ENCODE measurements at regions of chr10 and their contacts with region 1.

Region 1: GRCh38 chr10:124916585-124917427 is 25.1 kb upstream of the ZRANB1 start:
- DNase-seq: peak; percentile 98 to 99
- ATAC-seq: peak; percentile 98 to 99 (median 99)
- H3K4me3 ChIP-seq: peak overlapping the region; percentile 74 to 92 (median 86)
- H3K27ac ChIP-seq: peak overlapping the region; percentile 86 to 99 (median 96)
- H3K4me1 ChIP-seq: peaks cover 7 to 55% (median 46%) of the 10 kb centered on the region in 9 donors
- H3K27me3 ChIP-seq: no peaks in the 10 kb centered on the region
- CTCF ChIP-seq: peak in 1 of 9 donors; percentile 4

Region 2: GRCh38 chr10:124802313-124802675 is 114.5 kb before region 1 on chr10:
- intact Hi-C with region 1: loop called in 2 of 10 experiments (anchors 10 kb)
- DNase-seq: no peak
- ATAC-seq: peak in 1 of 8 donors; percentile 22
- H3K4me3 ChIP-seq: peak overlapping the region; percentile 90 to 100 (median 99)
- H3K27ac ChIP-seq: peak overlapping the region in 9 of 10 donors; percentile 77 to 94 (median 86)
- H3K4me1 ChIP-seq: peaks cover 5 to 23% (median 17%) of the 10 kb centered on the region in 9 donors
- H3K27me3 ChIP-seq: no peaks in the 10 kb centered on the region
- CTCF ChIP-seq: no peak

Region 3: DNA sequence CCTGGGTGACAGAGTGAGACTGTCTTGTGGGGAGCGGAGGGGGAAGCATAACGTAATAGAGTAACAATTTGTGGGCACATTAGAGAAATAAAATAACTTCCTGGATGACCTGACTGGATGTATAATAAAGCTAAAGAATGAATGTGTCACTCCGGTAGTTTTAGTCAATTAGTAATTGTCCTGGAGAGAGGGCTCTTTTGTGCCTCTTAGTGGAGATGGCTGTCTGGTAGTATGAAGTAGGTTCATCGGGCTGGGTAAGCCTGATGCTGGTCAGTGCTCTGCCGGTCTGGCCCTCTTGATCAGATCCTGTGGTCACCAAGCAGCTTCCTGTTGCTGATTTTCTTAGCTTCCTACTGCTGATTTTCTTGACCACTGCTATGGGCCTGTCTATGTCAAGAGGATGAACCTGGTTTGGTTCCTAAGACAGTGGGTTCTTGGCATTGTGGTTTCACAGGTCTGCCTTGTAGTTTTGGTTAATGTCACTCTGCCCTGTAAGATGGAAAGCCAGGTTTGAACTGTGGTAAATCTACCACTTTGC is 59.2 kb after region 1 on chr10:
- intact Hi-C with region 1: loop called in 3 of 10 experiments (anchors 10 kb)
- DNase-seq: no peak
- ATAC-seq: peak in 2 of 8 donors; percentile 17 to 29
- H3K4me3 ChIP-seq: no peak overlapping the region
- H3K27ac ChIP-seq: no peak overlapping the region
- H3K4me1 ChIP-seq: peaks cover 2 to 32% (median 14%) of the 10 kb centered on the region in 9 donors
- H3K27me3 ChIP-seq: no peaks in the 10 kb centered on the region
- CTCF ChIP-seq: no peak

Region 4: GRCh38 chr10:124992462-124993344 is 75.9 kb after region 1 on chr10:
- intact Hi-C with region 1: loop called in 1 of 10 experiments (anchors 10 kb)
- DNase-seq: peak; percentile 38 to 90
- ATAC-seq: peak; percentile 39 to 90 (median 76)
- H3K4me3 ChIP-seq: no peak overlapping the region
- H3K27ac ChIP-seq: peak overlapping the region in 1 of 10 donors; percentile 4
- H3K4me1 ChIP-seq: peaks cover 0 to 29% (median 5%) of the 10 kb centered on the region in 9 donors
- H3K27me3 ChIP-seq: no peaks in the 10 kb centered on the region
- CTCF ChIP-seq: peak; percentile 59 to 87 (median 79)

Region 5: GRCh38 chr10:125611216-125611615 is 694.4 kb after region 1 on chr10:
- intact Hi-C with region 1: no loop called
- DNase-seq: no peak
- ATAC-seq: no peak
- H3K4me3 ChIP-seq: no peak overlapping the region
- H3K27ac ChIP-seq: no peak overlapping the region
- H3K4me1 ChIP-seq: no peaks in the 10 kb centered on the region
- H3K27me3 ChIP-seq: no peaks in the 10 kb centered on the region
- CTCF ChIP-seq: no peak

Region 6: DNA sequence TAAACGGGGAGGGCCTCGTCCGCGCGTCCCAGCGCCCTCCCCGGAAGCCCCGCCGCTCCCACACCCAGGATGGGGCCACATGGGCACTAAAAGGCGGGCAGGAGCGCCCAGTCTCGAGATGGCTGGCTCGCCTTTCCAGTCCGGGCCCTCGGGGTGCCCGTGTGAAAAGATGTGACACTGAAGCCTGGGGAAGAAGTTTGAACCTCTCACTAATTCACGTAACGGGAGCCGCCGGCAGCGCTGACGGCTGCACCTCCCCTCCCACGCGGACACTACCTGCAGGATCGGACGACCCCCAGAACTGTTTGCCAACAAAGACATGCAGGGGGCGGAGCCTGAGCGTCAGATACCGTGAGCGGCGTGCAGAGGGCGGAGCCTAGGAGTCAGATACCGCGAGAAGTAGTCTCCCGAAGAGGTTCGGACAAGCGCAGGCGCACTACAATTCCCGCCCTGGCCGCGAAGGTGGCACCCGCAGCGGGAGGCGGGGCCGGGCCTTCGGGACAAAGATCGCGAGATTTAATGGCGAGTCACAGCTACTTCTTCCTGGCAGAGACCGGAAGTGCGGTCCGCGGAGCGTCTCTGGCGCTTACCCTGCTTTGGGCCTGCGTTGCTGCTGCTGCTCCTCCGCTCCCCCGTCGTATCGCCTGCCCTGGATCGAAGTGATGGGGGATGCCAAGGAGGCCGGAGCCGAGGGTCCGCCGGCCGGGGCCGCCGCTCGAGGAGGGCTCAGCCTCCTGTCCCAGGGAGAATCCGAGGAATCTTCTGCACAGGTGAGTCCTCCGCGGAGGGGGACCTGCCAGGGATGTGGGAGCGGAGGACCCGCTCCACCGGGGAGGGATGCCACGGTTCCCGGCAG is 802.6 kb after region 1 on chr10 and contains the start of gene EDRF1:
- intact Hi-C with region 1: loop called in 1 of 10 experiments (anchors 10 kb)
- DNase-seq: peak; percentile 99
- ATAC-seq: peak; percentile 100
- H3K4me3 ChIP-seq: peak within 1 kb of the TSS; percentile 83 to 97 (median 90)
- H3K27ac ChIP-seq: peak within 1 kb of the TSS; percentile 65 to 94 (median 88)
- H3K4me1 ChIP-seq: peaks cover 5 to 29% (median 15%) of the 10 kb centered on the region in 9 donors
- H3K27me3 ChIP-seq: no peaks in the 10 kb centered on the region
- CTCF ChIP-seq: no peak
- total RNA-seq, gene EDRF1: 7.7 to 13.2 (median 10.2) TPM